ENCODE measurements at regions of chr17 and their contacts with region 1.

Region 1: DNA sequence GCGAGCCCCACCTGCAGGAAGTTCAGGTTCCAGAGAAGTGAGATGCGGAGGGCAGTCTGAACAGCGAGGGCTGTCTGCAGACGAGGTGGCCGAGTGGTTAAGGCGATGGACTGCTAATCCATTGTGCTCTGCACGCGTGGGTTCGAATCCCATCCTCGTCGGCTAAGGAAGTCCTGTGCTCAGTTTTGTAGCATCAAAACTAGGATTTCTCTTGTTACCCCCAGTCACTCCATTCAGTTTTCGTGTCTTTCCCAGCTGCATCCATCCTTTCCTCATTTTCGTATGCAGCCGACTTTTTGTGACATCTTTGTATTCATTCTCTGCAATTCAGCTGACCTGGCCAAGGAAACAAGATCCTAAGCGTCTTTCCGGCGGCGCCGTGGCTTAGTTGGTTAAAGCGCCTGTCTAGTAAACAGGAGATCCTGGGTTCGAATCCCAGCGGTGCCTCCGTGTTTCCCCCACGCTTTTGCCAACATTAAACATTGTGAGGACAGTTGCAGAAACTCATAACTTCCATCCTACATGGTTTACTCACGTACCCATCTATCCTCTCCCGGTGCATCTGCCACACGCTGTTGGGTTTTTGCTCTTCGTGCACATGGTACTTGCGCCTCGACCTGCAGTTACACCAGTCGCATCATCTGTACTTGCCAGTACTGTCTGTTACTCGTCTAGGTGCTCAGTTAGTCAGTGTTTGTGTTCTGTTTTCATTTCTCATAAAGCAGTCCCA is 3.0 kb downstream of the BORCS6 start:
- DNase-seq: peak; percentile 96
- ATAC-seq: peak; percentile 87

Region 2: GRCh38 chr17:8119581-8120519 is 67.1 kb before region 1 on chr17:
- intact Hi-C with region 1: loop called (anchors 5 kb)
- DNase-seq: peak; percentile 88
- ATAC-seq: peak; percentile 77

Region 3: GRCh38 chr17:8138672-8139371 is 48.1 kb before region 1 on chr17:
- intact Hi-C with region 1: loop called (anchors 2 kb)
- DNase-seq: peak; percentile 98
- ATAC-seq: peak; percentile 88

Region 4: DNA sequence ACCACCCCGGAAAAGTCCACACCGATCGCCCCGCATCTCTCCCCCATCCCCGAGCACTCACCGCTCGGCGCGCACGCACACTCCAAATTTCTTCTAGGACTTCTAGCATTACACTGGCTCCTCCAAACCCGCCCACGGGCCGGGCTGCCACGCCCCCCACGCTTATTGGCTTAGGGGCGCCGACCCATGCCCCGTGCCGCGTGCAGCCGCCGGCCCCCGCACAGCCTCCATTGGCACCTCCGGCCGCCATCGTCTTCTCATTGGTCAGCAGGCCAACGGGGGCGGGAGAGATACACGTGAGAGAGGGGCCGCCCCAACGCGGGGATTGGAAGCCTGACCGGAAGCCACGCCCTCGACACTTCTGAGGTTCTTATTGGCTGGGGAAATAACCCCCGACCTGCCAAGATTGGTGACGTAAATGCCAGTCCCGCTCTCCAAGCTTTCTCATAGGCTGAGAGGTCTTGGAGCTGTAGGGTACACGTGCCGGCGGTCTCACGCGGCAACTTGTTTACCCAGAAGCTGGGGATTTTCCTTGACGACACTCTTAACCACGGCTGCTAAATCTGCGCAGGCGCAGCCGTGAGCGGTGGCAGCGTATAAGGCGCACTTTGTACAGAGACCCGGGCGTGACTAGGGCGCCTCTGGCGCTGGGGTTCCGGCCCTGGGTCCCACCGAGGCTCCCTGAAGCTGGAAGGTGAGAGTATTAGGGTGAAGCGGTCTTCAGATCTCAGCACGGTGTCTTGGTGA is 30.5 kb before region 1 on chr17:
- intact Hi-C with region 1: no loop called
- DNase-seq: peak; percentile 100
- ATAC-seq: peak; percentile 72